Activated CD8-positive, alpha-beta T cell treated with anti-CD3 and anti-CD28 coated beads, Interleukin-2, amount 10 ng/mL, durations not matched to agents 7 days and 5 days (primary cell): ENCODE measurements at regions of chr5 and their contacts with region 1.

Region 1: DNA sequence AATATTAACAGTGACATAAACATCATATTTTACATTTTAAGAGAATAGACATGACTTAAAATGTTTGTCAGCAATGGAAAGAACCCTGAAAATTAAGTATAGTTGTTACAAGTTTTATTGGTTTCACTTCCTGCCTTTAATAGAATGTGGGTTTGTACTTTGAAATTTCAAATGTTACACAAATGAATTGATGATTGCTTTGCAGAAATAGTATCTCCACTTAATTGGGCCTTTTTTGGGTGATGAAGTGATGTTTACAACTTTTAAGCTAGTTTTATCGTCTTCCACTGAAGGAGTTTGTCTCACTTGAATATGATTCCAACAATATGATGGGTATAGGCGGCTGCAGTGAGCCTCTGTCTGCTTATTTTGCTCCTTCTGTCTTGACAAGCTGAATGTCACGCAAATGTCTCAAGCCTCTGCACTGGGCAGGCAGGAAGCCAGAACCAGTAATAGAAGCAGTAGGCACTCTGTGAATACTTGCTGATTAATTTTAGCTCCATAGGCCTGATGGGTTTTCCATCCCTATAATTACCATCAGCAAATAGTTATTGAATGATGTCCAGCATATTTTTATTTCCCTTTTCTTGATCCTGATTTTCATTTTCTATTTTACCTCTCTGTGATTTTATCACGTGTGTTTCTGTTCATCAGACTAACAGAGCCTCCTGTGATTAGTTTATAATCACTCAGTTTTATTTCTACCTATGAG is 10.6 kb upstream of the NR3C1 start:
- DNase-seq: no peak
- ATAC-seq: no peak
- H3K4me3 Mint-ChIP-seq: no peak overlapping the region
- H3K27ac Mint-ChIP-seq: peak overlapping the region; percentile 23
- H3K4me1 Mint-ChIP-seq: peaks cover 27% of the 10 kb centered on the region
- H3K27me3 Mint-ChIP-seq: no peaks in the 10 kb centered on the region

Region 2: DNA sequence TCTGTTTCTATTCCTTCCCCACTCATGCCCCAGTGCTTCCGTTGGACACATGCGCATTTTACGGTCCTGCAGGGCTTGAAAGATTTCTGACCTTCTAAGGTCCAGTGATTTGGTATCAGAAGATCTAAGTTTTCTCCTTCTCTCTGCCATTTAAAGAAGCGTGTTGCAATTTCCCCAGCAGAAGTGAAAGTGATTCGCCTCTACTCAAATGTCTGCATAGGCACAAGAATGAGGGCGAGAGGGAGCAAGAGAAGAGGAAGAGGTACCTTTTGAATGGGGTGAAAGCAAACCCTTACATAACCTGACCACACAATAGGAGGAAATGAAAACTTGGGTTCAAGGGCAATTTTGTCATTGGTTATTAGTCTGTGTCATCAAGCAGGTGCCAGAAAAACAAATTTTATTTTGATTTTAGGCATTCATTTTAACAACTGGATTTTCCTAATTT is 21.1 kb after region 1 on chr5:
- CTCF ChIA-PET with region 1: interaction called, 16 read pairs
- POLR2A ChIA-PET with region 1: interaction called, 3 read pairs
- DNase-seq: peak; percentile 56
- ATAC-seq: peak; percentile 77
- H3K4me3 Mint-ChIP-seq: peak overlapping the region; percentile 86
- H3K27ac Mint-ChIP-seq: peak overlapping the region; percentile 94
- H3K4me1 Mint-ChIP-seq: peaks cover 33% of the 10 kb centered on the region
- H3K27me3 Mint-ChIP-seq: no peaks in the 10 kb centered on the region

Region 3: GRCh38 chr5:143456952-143457547 is 42.9 kb after region 1 on chr5:
- CTCF ChIA-PET with region 1: no interaction called
- POLR2A ChIA-PET with region 1: no interaction called
- DNase-seq: no peak
- ATAC-seq: no peak
- H3K4me3 Mint-ChIP-seq: no peak overlapping the region
- H3K27ac Mint-ChIP-seq: no peak overlapping the region
- H3K4me1 Mint-ChIP-seq: no peaks in the 10 kb centered on the region
- H3K27me3 Mint-ChIP-seq: no peaks in the 10 kb centered on the region